B cell (primary cell): ENCODE measurements at regions of chr3 and their contacts with region 1.

Region 1: DNA sequence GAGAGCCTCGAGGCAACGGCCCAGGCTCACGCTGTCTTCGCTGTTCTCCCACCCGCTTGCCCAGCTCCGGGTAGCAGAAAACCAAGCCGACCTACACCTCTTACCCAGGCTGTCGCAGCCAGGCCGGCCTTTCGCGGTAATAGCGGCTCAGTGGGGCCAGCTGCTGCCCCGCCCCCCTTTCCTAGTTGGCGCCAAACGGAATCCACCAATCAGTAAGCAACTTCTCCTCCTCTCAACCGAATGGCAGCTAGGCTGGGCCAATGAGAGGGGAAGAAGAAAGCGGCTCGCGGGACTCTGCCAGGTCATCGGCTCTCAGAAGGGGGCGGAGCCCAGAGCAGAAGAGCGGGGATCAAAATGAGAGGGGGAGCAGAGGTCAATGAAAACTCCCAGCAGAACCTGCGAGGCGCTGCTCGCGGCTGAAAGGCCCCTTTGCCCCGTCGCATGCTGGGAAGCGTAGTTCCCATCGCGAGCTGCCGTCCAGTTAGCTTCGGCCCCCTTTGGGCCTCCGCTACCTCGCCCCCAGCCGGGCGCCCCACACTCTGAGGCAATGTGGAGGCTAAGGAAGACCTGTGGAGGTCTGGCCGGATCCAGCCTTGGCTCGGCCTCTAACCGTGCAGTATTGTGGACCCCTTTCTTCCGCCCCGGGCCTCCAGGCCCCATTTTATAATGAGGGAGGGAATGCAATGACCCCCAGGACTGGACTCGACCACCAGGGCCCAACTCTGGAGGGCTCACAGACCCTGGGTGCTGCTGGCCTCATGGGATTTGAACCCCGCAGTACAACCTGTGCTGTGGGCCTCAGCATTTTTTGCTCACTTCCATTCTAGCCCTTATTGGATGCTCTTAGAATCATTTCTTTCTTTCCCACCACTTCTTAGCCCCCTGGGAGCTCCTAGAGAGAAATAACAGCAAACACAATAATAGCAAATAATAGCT is at the start of gene CDC25A:
- DNase-seq: peak; percentile 97
- ATAC-seq: peak; percentile 99
- H3K4me3 ChIP-seq: peak within 1 kb of the TSS; percentile 51 to 96 (median 76)
- H3K4me3 Mint-ChIP-seq: peak within 1 kb of the TSS; percentile 94
- H3K27ac ChIP-seq: peak within 1 kb of the TSS; percentile 38 to 71
- H3K27ac Mint-ChIP-seq: peak within 1 kb of the TSS; percentile 84
- H3K4me1 ChIP-seq: peaks cover 12 to 15% of the 10 kb centered on the region in 2 donors
- H3K4me1 Mint-ChIP-seq: peaks cover 15% of the 10 kb centered on the region
- H3K27me3 ChIP-seq: peaks cover 0 to 19% (median 8%) of the 10 kb centered on the region in 4 experiments
- H3K27me3 Mint-ChIP-seq: peaks cover 17% of the 10 kb centered on the region
- CTCF ChIP-seq: no peak
- total RNA-seq, gene CDC25A: 0.07 and 0.53 TPM in 2 replicates

Region 2: DNA sequence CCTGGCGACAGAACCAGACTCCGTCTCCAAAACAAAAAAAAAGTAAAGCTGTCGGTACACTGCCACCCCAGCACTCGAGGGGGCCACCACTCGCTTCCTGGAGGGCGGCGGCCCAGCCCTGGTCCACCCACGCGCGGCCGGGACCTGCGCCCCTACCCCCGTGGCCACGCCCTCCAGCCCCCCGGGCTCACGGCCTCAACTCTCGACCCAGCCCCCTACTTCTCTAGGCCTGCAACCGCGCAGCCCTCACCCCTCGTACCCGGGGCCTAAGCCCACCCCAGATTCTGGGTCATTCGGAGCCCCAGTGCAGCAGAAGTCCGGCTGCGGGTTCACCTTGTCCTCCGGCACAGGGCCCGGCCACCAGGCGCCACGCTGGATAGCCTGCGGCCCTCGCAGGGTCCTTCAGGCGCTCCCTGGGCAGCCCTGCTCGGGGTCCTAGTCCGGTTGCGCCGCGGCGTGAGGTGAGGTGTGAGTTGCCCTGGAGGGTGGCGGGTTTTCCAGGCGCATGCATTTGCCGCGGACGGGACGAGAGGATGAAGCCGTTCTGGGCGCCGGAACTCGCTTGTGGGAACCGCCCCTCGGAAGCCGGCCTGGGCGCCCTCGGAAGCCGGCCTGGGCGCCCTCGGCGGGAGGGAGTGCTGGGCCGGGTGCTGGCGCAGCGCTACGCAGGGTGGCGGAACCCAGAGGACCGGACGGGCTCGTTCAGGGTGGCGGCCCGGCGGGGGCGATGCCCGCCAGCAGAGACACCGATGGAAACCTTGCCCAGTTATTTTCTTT is 112.7 kb after region 1 on chr3:
- CTCF ChIA-PET with region 1: no interaction called
- POLR2A ChIA-PET with region 1: no interaction called
- intact Hi-C with region 1: loop called (anchors 2 kb)
- DNase-seq: peak; percentile 94
- ATAC-seq: peak; percentile 91
- H3K4me3 ChIP-seq: peak within 1 kb of the TSS; percentile 41 to 90 (median 82)
- H3K4me3 Mint-ChIP-seq: peak within 1 kb of the TSS; percentile 97
- H3K27ac ChIP-seq: peak within 1 kb of the TSS; percentile 92 to 96
- H3K27ac Mint-ChIP-seq: peak within 1 kb of the TSS; percentile 99
- H3K4me1 ChIP-seq: peaks cover 17 to 25% of the 10 kb centered on the region in 2 donors
- H3K4me1 Mint-ChIP-seq: peaks cover 55% of the 10 kb centered on the region
- H3K27me3 ChIP-seq: no peaks in the 10 kb centered on the region
- H3K27me3 Mint-ChIP-seq: no peaks in the 10 kb centered on the region
- CTCF ChIP-seq: no peak

Region 3: DNA sequence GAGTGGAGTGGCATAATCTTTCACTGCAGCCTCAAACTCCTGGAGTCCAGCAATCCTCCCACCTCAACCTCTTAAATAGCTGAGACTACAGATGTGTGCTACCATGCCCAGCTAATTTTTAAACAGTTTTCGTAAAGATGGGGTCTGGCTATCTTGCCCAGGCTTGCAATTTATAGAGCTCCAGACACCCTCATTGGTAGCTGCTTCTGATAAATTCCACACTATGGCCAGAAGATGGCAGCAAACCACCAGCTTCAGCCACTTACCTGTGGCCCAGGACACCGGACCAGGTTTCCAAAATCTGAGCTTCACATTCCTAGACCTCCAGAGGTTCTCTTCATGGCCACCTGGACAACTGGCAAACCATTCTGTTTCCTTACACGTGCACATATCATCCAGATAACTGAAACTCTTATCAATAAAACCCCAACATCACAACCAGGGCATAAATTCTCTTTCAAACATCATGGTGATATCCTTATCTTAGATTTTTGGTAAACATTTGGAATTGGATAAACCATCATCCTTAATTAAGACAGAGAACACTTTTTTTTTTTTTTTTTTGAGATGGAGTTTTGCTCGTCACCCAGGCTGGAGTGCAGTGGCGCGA is 212.4 kb after region 1 on chr3:
- CTCF ChIA-PET with region 1: no interaction called
- POLR2A ChIA-PET with region 1: no interaction called
- intact Hi-C with region 1: no loop called
- DNase-seq: peak; percentile 83
- ATAC-seq: peak; percentile 89
- H3K4me3 ChIP-seq: no peak overlapping the region
- H3K4me3 Mint-ChIP-seq: no peak overlapping the region
- H3K27ac ChIP-seq: no peak overlapping the region
- H3K27ac Mint-ChIP-seq: no peak overlapping the region
- H3K4me1 ChIP-seq: no peaks in the 10 kb centered on the region
- H3K4me1 Mint-ChIP-seq: no peaks in the 10 kb centered on the region
- H3K27me3 ChIP-seq: peaks cover 0 to under 1% (median 0%) of the 10 kb centered on the region in 4 experiments
- H3K27me3 Mint-ChIP-seq: peaks cover 8% of the 10 kb centered on the region
- CTCF ChIP-seq: peak; percentile 93